Ascending aorta (tissue), 2 donors: ENCODE measurements at regions of chr5 and their contacts with region 1.

Region 1: DNA sequence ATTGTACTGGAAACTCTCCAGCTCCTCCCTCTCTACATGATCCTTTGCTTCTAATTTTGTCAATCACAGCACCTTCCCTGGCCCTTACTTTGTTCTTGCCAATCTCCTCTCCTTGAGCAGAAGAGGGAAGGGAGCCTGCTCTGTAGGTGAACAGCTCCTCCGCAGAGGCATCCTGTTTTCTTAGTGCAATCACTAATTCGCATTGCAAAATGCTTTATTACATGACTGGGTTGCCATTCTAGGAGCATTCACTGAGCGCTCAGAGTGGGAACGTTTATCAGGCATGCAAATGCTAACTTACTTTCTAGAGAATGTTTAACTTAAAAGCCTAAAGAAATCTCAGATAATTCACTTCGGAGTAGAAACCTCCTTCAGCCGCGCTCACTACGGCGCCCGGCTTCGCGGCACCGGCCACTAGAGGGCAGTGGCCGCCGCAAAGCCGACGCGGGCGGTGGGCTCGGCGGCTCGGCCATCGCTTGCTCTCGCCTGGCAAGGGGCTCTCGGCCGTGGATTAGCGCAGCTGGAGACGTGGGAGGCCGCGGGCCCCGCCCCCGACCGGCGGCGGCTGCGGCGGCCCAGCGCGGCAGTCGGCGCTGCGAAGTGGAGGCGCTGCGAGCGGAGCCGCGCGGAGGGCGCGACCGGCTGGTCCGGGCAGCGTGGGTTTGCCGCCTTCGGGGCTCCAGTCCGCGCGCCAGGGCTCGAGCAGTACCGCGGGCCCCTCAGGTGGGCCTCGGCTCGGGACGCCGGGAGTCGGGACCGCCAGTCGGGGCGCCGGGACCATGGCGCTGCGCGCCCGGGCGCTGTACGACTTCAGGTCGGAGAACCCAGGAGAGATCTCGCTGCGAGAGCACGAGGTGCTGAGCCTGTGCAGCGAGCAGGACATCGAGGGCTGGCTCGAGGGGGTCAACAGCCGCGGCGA is at the start of gene SNX18:
- DNase-seq: peak; percentile 69 to 96
- H3K4me3 ChIP-seq: peak within 1 kb of the TSS; percentile 93 to 96
- H3K27ac ChIP-seq: peak within 1 kb of the TSS; percentile 95 to 97
- H3K4me1 ChIP-seq: peaks cover 0 to 8% of the 10 kb centered on the region in 2 donors
- H3K27me3 ChIP-seq: no peaks in the 10 kb centered on the region
- CTCF ChIP-seq: peak; percentile 95 to 99 (median 97)
- total RNA-seq, gene SNX18: 200 TPM

Region 2: DNA sequence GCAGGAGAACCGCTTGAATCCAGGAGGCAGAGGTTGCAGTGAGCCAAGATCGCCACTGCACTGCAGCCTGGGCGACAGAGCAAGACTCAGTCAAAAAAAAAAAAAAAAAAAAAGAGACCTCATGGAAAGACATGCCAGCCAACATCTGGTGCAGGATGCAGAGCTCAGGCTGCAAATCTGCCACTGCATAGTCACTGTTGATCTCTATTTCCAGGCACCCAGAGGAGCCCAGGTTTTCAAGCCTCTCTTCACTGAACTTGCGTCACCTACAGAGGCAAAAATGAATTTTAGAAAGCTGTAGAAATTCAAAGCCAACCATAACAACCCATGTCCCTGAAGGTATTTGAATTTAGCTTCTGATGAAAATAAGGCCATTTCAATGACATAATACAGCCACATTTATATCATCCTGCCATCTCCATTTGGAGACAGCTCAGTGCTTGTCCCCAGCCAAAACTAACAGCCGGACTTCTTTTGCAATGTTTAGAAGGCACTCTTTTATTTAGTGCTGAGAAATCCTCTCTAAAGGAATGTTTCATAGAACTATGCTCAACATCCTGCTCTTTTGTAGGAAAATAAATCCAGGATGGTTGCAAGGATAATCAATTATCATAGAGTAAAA is 113.4 kb after region 1 on chr5:
- intact Hi-C with region 1: loop called (anchors 5 kb)
- DNase-seq: peak in 1 of 2 donors; percentile 88
- H3K4me3 ChIP-seq: no peak overlapping the region
- H3K27ac ChIP-seq: peak overlapping the region; percentile 79 to 83
- H3K4me1 ChIP-seq: peaks cover 6 to 25% of the 10 kb centered on the region in 2 donors
- H3K27me3 ChIP-seq: no peaks in the 10 kb centered on the region
- CTCF ChIP-seq: peak in 1 of 3 experiments; percentile 11

Region 3: GRCh38 chr5:54703133-54703532 is 185.7 kb after region 1 on chr5:
- intact Hi-C with region 1: loop called (anchors 5 kb)
- DNase-seq: peak in 1 of 2 donors; percentile 88
- H3K4me3 ChIP-seq: peak overlapping the region; percentile 31 to 50
- H3K27ac ChIP-seq: peak overlapping the region; percentile 76 to 88
- H3K4me1 ChIP-seq: peaks cover 6 to 54% of the 10 kb centered on the region in 2 donors
- H3K27me3 ChIP-seq: no peaks in the 10 kb centered on the region
- CTCF ChIP-seq: no peak

Region 4: DNA sequence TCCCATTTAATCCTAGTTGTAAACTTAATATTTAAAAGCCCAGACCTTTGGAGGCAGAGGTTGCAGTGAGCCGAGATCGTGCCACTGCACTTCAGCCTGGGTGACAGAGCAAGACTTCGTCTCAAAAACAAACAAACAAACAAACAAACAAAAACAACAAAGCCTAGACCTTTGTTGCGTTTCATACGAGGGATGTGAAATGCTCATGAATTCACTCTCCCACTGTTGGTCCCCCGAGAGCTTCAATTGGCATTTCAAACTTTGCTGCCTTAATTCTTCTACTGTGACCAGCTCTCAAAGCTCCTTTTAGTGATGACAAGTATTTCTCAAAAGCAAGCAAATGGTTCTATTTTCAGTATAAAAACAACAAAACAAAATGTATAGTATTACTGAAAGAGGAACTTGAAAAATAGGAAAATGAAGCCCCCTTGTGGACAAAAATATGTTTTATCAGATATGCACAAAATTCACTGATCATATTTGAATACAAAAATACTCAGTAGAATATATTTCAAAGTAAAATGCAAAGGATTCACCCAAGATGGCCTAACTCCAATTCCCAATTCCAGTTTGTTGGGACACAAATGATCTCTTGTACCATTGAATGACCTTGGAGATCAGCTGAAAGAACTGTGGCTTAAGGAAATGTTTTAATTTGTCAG is 327.6 kb after region 1 on chr5:
- intact Hi-C with region 1: loop called (anchors 1 kb)
- DNase-seq: no peak
- H3K4me3 ChIP-seq: peak overlapping the region; percentile 23 to 53
- H3K27ac ChIP-seq: peak overlapping the region; percentile 76 to 80
- H3K4me1 ChIP-seq: peaks cover 0 to 12% of the 10 kb centered on the region in 2 donors
- H3K27me3 ChIP-seq: no peaks in the 10 kb centered on the region
- CTCF ChIP-seq: peak; percentile 46 to 62 (median 55)

Region 5: DNA sequence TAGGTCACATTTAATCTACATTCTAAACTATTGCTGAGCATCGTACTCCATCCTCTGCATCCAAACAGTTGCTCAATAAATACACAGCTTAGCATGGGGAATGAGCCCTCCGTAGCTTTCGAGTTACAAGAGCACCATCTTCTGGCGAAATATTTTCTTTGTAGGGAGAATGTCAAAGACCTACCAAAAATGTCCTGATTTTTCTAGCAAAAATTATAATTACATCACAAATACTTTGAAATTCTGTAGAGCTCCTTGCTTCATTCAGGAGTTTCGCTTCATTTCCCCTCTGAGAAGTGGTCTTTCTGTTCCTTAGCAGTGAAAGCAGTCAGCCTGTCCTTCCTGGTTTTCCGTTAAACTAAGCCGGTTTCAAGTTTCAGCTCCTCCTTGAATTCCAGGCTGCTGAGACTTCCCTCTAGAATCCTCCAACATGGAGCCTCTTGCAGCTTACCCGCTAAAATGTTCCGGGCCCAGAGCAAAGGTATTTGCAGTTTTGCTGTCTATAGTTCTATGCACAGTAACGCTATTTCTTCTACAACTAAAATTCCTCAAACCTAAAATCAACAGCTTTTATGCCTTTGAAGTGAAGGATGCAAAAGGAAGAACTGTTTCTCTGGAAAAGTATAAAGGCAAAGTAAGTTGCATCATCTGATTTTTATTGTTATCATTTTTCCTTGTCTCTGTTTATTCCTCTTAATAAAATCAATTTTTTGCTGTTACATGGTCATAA is 642.5 kb after region 1 on chr5 and contains the start of gene GPX8:
- intact Hi-C with region 1: loop called (anchors 10 kb)
- DNase-seq: no peak
- H3K4me3 ChIP-seq: peak within 1 kb of the TSS; percentile 47 to 58
- H3K27ac ChIP-seq: peak within 1 kb of the TSS; percentile 54 to 67
- H3K4me1 ChIP-seq: no peaks in the 10 kb centered on the region
- H3K27me3 ChIP-seq: no peaks in the 10 kb centered on the region
- CTCF ChIP-seq: peak; percentile 46 to 71 (median 64)
- total RNA-seq, gene GPX8: 27.9 TPM

Region 6: DNA sequence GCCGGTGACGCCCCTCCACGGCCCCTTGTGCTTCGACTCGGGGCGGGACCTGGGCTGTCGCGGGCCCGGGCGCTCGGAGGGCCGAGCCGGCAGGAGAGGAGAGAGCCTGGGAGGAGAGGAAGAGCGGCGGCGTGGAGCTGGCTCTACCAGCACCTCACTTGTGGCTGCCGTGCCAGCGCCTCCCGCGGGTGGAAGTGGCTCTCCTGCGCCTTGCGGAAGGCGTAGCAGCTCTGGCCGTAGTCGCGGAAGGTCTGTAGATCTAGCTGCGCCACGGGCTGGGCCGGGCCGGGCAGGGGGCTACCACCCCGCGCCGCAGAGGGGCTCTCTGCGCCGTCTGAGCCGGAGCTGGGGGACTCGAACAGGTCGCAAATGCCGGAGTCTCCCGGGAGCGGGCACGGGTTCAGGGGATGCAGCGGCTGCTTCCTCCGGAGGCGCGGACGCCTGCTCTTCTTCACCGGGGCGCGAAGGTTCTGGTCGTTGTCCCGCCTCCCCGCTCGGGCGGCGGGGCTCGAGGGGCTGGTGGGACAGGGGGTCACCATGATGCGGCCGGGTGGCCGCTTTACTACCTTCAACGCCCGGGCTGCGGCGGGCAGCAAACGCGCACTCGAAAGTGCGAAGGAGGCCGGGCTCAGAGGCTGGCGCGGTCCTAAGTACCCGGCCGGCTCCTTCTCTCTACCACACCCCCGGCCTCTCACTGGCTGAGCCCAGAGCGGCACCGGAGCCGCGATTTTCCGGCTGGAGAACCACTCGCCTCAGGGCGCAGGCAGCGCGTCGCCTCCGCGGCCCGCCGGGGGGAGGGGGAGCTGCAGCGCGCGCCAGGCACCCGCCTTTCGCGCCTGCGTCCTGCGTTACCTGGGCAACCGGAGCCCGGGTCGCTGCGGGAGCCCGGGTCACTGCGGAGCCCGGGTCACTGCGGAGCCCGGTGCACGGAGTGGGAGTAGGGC is 715.8 kb after region 1 on chr5 and contains the start of gene CCNO:
- intact Hi-C with region 1: no loop called
- DNase-seq: peak in 1 of 2 donors; percentile 85
- H3K4me3 ChIP-seq: peak within 1 kb of the TSS; percentile 73 to 82
- H3K27ac ChIP-seq: peak within 1 kb of the TSS; percentile 44 to 63
- H3K4me1 ChIP-seq: peaks cover 2 to 18% of the 10 kb centered on the region in 2 donors
- H3K27me3 ChIP-seq: peaks cover 9% of the 10 kb centered on the region
- CTCF ChIP-seq: no peak
- total RNA-seq, gene CCNO: 43.2 TPM